Sciatic nerve (tissue), 2 donors: ENCODE measurements at regions of chr3 and their contacts with region 1.

Region 1: GRCh38 chr3:185176750-185177359 is 24.0 kb upstream of the C3orf70 start:
- DNase-seq: no peak
- ATAC-seq: no peak

Region 2: DNA sequence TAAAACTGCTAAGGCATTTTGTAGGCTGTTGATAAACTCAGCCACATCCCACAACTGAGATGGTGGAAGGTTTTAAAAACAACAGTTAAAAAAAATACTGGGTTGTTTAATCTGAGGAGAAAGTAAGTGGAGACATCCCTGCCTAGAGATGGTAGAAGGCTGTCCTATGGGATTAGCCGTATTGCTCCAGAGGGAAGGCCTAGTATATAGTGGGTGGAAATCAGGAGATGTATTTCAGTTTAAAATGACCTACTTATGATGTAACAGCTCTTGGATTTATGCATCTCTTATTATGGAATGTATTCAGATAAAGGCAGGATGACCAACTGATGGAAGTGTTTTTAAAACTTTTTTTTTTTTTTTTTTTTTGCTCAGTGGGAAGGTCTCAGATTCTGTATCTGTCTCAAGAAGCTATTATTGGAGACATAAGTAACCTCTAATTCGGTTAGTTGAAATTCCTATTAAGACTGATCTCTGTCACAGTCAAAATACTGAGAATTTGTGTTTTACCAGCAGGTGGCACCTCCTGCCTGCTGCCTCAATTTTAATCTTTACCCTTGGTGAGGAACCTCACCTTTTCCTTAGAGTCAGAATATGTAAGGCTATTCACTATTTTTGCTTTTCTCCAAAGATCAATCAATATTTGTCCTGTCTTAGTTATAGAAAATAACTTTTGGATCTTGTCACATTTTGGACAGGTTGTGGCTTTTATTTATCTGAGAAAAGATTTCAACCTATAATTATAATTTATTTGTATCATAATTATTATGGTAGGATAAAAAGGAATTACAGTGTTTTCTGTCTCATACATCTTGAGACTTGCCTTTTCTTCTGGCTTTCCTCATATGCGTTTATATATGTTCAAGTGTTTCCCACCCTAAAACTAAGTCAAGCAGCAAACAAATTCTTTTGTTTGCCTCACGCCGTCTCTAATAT is 301.9 kb before region 1 on chr3:
- intact Hi-C with region 1: loop called (anchors 10 kb)
- DNase-seq: no peak
- ATAC-seq: no peak

Region 3: GRCh38 chr3:185152410-185153210 is 24.2 kb before region 1 on chr3 and contains the start of gene C3orf70:
- intact Hi-C with region 1: no loop called
- DNase-seq: peak; percentile 82
- ATAC-seq: peak; percentile 77
- total RNA-seq, gene C3orf70: 12.9 TPM

Region 4: DNA sequence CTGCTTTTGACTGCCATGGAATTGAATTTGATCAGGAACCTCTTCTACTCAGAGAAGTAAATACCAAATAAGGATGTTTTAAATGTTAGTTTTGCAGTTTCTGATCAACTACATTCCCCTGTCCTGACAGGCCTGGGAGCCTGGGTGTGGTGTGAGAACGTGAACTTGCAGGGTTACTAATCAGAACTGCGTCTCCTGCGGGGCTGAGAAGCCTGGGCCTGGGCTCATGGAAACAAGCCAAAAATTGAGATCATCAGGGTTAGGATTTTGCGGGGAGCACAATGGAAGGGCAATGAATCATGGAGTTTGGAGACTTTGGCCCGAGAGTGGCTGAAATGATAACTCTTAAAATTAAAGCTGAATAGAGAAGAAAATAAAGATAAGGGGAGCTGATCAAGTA is 23.8 kb after region 1 on chr3:
- intact Hi-C with region 1: no loop called
- DNase-seq: no peak
- ATAC-seq: no peak